CD8-positive, alpha-beta T cell (primary cell): ENCODE measurements at regions of chrX and their contacts with region 1.

Region 1: GRCh38 chrX:123878252-123878721 is 18.4 kb downstream of the XIAP start:
- DNase-seq: peak in 2 of 9 experiments; percentile 24 to 55
- ATAC-seq: peak; percentile 59
- H3K4me3 ChIP-seq: no peak overlapping the region
- H3K4me3 Mint-ChIP-seq: peak overlapping the region; percentile 61
- H3K27ac ChIP-seq: peak overlapping the region; percentile 20 to 65
- H3K27ac Mint-ChIP-seq: peak overlapping the region; percentile 69
- H3K4me1 ChIP-seq: peaks cover 12% of the 10 kb centered on the region
- H3K4me1 Mint-ChIP-seq: peaks cover 32% of the 10 kb centered on the region
- H3K27me3 ChIP-seq: no peaks in the 10 kb centered on the region
- H3K27me3 Mint-ChIP-seq: no peaks in the 10 kb centered on the region
- CTCF ChIP-seq: no peak

Region 2: GRCh38 chrX:123277821-123278423 is 600.4 kb before region 1 on chrX:
- CTCF ChIA-PET with region 1: no interaction called
- POLR2A ChIA-PET with region 1: no interaction called
- intact Hi-C with region 1: no loop called
- DNase-seq: no peak
- ATAC-seq: no peak
- H3K4me3 ChIP-seq: no peak overlapping the region
- H3K4me3 Mint-ChIP-seq: no peak overlapping the region
- H3K27ac ChIP-seq: no peak overlapping the region
- H3K27ac Mint-ChIP-seq: no peak overlapping the region
- H3K4me1 ChIP-seq: no peaks in the 10 kb centered on the region
- H3K4me1 Mint-ChIP-seq: no peaks in the 10 kb centered on the region
- H3K27me3 ChIP-seq: no peaks in the 10 kb centered on the region
- H3K27me3 Mint-ChIP-seq: no peaks in the 10 kb centered on the region
- CTCF ChIP-seq: no peak

Region 3: GRCh38 chrX:123859846-123860838 is 18.1 kb before region 1 on chrX and contains the start of gene XIAP:
- CTCF ChIA-PET with region 1: interaction called, 3 read pairs
- POLR2A ChIA-PET with region 1: interaction called, 3 read pairs
- intact Hi-C with region 1: loop called in 1 of 2 experiments (anchors 2 kb)
- DNase-seq: peak; percentile 27 to 81 (median 61)
- ATAC-seq: peak; percentile 72
- H3K4me3 ChIP-seq: peak within 1 kb of the TSS; percentile 81
- H3K4me3 Mint-ChIP-seq: peak within 1 kb of the TSS; percentile 96
- H3K27ac ChIP-seq: peak within 1 kb of the TSS; percentile 83 to 95
- H3K27ac Mint-ChIP-seq: peak within 1 kb of the TSS; percentile 98
- H3K4me1 ChIP-seq: peaks cover 6% of the 10 kb centered on the region
- H3K4me1 Mint-ChIP-seq: peaks cover 21% of the 10 kb centered on the region
- H3K27me3 ChIP-seq: no peaks in the 10 kb centered on the region
- H3K27me3 Mint-ChIP-seq: no peaks in the 10 kb centered on the region
- CTCF ChIP-seq: no peak
- total RNA-seq, gene XIAP: 15.2 to 24.2 TPM

Region 4: GRCh38 chrX:123899701-123900100 is 21.4 kb after region 1 on chrX:
- CTCF ChIA-PET with region 1: no interaction called
- POLR2A ChIA-PET with region 1: no interaction called
- intact Hi-C with region 1: no loop called
- DNase-seq: no peak
- ATAC-seq: no peak
- H3K4me3 ChIP-seq: no peak overlapping the region
- H3K4me3 Mint-ChIP-seq: no peak overlapping the region
- H3K27ac ChIP-seq: no peak overlapping the region
- H3K27ac Mint-ChIP-seq: no peak overlapping the region
- H3K4me1 ChIP-seq: no peaks in the 10 kb centered on the region
- H3K4me1 Mint-ChIP-seq: no peaks in the 10 kb centered on the region
- H3K27me3 ChIP-seq: no peaks in the 10 kb centered on the region
- H3K27me3 Mint-ChIP-seq: no peaks in the 10 kb centered on the region
- CTCF ChIP-seq: no peak

Region 5: DNA sequence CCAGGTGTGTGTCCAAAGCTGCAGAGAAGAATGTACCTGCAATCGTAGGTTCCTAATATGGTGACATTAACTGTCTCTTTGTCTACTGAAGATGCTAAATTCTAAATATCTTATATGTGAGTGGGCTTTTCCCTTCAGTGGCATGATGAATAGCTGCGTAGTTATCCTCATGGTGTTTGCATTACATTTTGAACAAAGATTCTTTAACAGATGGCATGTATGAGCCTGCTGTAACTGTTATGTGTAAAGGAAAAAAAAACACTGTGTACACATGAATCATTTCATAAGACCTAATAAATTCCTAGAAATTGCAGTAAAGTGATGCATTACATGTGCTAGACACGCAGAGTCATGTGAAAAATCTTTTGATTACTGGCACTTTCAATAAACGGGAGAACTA is 756.1 kb after region 1 on chrX:
- CTCF ChIA-PET with region 1: no interaction called
- POLR2A ChIA-PET with region 1: no interaction called
- intact Hi-C with region 1: no loop called
- DNase-seq: no peak
- ATAC-seq: no peak
- H3K4me3 ChIP-seq: no peak overlapping the region
- H3K4me3 Mint-ChIP-seq: no peak overlapping the region
- H3K27ac ChIP-seq: no peak overlapping the region
- H3K27ac Mint-ChIP-seq: no peak overlapping the region
- H3K4me1 ChIP-seq: no peaks in the 10 kb centered on the region
- H3K4me1 Mint-ChIP-seq: no peaks in the 10 kb centered on the region
- H3K27me3 ChIP-seq: no peaks in the 10 kb centered on the region
- H3K27me3 Mint-ChIP-seq: no peaks in the 10 kb centered on the region
- CTCF ChIP-seq: no peak